Colonic mucosa (tissue), 4 donors: ENCODE measurements at regions of chr5 and their contacts with region 1.

Region 1: DNA sequence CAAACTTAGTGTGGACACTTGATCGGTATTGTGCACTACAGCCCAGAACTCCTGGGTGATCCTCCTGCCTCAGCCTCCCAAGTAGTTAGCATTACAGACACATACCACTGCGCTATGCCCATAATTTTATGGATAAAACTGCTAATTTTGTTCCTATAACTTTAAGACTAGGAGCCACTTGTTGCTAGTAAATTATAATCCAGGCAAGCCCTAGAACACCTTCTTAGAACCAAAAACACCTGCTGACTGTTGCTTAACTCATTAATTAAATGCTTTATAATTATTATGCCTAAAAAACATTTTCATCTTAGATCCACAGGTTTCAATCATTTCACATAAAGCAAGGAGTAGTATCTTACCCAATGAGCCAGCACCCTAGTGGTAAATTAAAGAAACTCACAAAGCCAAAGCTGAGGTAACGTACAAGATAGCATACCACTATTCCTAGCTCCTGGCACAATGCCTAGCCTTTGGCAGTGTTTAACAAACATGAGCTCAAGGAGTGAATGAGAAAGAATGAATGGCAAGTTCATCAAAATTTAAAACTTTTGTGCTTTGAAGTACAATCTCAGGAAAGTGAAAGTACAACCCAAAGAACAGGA is 5.4 kb downstream of the MRPS27 start:
- DNase-seq: no peak
- H3K4me3 ChIP-seq: no peak overlapping the region
- H3K27ac ChIP-seq: no peak overlapping the region
- H3K4me1 ChIP-seq: no peaks in the 10 kb centered on the region
- H3K27me3 ChIP-seq: no peaks in the 10 kb centered on the region
- CTCF ChIP-seq: no peak

Region 2: GRCh38 chr5:72134226-72134899 is 180.3 kb before region 1 on chr5:
- intact Hi-C with region 1: loop called (anchors 5 kb)
- DNase-seq: no peak
- H3K4me3 ChIP-seq: no peak overlapping the region
- H3K27ac ChIP-seq: no peak overlapping the region
- H3K4me1 ChIP-seq: no peaks in the 10 kb centered on the region
- H3K27me3 ChIP-seq: no peaks in the 10 kb centered on the region
- CTCF ChIP-seq: no peak

Region 3: DNA sequence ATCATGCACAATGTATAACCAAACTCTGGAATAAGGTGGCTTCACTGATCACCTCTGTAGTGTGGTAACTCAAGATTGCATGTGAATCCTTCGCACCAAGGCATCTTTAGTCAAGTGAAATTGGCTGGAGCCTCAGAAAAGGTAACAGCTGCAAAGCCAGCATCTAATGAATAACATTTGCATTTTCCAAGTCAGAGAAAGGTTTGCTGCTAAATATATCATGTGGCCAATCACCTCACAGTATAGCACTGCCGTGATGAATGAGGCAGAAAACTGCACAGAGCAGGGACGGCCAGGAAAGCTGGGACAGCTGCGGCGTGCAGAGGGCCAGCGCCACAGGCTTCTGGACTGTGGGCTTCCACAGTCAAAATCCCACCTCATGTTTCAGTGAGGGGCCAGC is 13.1 kb before region 1 on chr5:
- intact Hi-C with region 1: no loop called
- DNase-seq: no peak
- H3K4me3 ChIP-seq: no peak overlapping the region
- H3K27ac ChIP-seq: no peak overlapping the region
- H3K4me1 ChIP-seq: no peaks in the 10 kb centered on the region
- H3K27me3 ChIP-seq: no peaks in the 10 kb centered on the region
- CTCF ChIP-seq: no peak